Posterior cingulate gyrus (tissue), 11 donors: ENCODE measurements at regions of chr2 and their contacts with region 1.

Region 1: GRCh38 chr2:54838585-54839035 is 115.1 kb downstream of the EML6 start:
- DNase-seq: peak in 8 of 10 donors; percentile 31 to 92 (median 70)

Region 2: DNA sequence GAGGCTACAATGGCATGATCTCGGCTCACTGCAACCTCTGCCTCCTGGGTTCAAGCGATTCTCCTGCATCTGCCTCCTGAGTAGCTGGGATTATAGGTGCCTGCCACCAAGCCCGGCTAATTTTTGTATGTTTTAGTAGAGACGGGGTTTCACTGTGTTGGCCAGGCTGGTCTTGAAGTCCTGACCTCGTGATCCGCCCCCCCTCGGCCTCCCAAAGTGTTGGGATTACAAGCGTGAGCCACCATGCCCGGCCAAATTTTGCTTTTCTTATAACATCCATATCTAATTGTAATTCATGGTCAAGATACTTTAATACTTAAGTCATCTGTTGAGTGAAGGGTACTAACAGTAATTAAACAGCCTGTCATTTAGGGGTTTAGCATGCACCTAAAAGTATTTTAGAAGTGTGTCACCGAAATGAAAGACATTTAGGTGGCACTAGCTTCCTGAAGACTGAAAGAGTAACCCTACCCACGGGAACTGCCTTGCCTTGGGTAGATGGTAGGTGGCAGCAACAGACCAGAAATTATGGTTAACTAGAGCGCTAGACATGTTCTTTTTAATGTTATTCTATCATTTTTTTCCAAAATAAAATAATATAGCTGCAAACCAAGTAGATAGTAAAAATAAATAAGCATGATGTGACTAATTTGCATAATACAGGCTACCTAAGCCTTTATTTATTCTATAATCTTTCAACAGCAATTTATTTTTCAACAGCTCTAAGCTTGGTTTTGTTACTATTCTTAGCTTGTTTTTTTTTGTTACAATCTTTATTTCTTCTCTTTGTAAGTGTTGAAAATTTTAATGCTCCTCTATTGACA is 731.8 kb before region 1 on chr2:
- intact Hi-C with region 1: loop called (anchors 10 kb)
- DNase-seq: peak in 8 of 10 donors; percentile 23 to 87 (median 54)

Region 3: GRCh38 chr2:54723131-54723995 is 115.2 kb before region 1 on chr2 and contains the start of gene EML6:
- intact Hi-C with region 1: loop called (anchors 1 kb)
- DNase-seq: peak; percentile 95 to 100 (median 98)